Tibial artery (tissue), 4 donors: ENCODE measurements at regions of chr9 and their contacts with region 1.

Region 1: DNA sequence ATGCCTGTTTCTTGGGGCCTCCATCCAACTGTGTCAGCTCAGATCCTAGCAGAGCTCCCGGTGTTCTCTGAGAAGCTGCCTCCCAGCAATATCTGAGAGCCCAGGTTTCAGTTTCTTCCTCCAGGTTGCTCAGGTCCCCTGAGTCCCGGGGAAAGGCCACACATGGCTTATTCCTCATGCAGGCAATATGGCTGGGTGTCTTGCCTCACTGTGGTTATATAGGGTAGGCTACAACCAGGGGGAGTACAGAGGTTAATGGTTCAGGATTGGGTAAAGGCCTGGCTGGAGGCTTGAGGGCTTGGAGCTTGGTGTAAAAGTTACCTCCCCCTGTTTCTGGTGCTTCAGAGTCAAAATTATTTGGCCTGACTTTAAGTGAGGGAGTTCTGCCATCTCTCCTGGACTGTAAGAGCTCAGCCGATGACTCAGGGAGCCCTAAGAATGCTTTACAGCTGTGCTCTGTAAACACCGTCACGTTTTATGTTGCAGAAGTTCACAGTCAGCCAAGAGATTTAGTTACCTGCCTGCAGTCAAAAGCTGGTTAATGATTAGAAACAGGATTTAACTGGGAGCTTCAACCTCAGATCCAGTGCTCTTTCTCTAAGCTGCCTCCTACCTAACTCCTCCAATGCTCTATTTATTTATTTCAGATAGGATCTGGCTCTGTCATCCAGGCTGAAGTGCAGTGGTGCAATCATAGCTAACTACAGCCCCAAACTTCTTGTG is 24.3 kb upstream of the UBAP2 start:
- DNase-seq: no peak
- H3K4me3 ChIP-seq: no peak overlapping the region
- H3K27ac ChIP-seq: no peak overlapping the region
- H3K4me1 ChIP-seq: peaks cover 0 to 20% (median 0%) of the 10 kb centered on the region in 4 donors
- H3K27me3 ChIP-seq: no peaks in the 10 kb centered on the region
- CTCF ChIP-seq: no peak

Region 2: GRCh38 chr9:33762343-33762742 is 310.7 kb before region 1 on chr9:
- intact Hi-C with region 1: no loop called
- DNase-seq: no peak
- H3K4me3 ChIP-seq: no peak overlapping the region
- H3K27ac ChIP-seq: no peak overlapping the region
- H3K4me1 ChIP-seq: no peaks in the 10 kb centered on the region
- H3K27me3 ChIP-seq: peaks cover 0 to 3% of the 10 kb centered on the region in 2 donors
- CTCF ChIP-seq: no peak

Region 3: DNA sequence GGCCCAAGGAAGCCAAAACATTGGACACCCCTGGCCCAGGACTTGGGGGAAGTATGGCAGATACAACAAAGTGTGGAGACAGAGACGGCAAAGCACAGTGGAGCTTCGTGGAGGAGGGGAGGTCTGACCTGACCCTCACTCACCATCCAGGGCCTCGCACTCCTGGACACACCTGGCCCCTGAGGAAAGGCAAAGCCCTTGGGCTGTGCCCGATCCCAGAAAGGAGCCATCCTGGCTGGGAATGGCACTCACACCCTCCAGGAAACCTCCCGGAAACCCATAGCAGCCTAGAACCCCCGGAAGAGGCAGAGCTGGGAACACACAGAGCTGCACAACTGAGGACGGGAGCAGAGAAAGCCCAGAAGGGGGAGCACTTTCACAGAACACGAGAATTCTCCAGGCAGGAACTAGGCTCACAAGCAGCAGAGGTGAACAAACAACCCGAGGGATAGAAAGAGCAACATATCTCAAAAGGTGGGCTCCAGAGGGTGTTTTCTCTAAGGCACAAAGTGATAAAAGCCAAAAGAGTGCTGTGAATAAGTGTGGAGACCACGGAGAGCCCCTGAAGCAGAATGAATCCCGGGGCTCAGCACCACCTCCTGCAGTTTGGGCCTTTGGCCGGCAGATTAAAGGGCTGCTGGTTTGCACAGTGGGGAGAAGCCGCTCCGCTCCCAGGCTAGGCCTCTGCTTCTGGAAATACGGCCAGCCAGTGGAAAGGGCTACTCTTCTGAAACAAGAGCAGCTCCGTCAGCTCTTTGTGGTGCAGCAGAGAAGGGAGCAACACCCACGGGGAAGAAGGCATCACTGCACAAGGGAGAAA is 147.8 kb before region 1 on chr9:
- intact Hi-C with region 1: loop called (anchors 10 kb)
- DNase-seq: peak in 1 of 2 donors; percentile 42
- H3K4me3 ChIP-seq: no peak overlapping the region
- H3K27ac ChIP-seq: no peak overlapping the region
- H3K4me1 ChIP-seq: peaks cover 0 to 7% (median 0%) of the 10 kb centered on the region in 4 donors
- H3K27me3 ChIP-seq: no peaks in the 10 kb centered on the region
- CTCF ChIP-seq: peak; percentile 40 to 53